Activated T-helper 2 cell treated with anti-CD3 and anti-CD28 coated beads, Interferon-gamma antibody, Interleukin-2, Interleukin-4, amounts not matched to agents 10 μg/mL and 5 μg/mL and 100 μg/mL, durations not matched to agents 14 hours and 24 hours and 36 hours (primary cell): ENCODE measurements at regions of chr6 and their contacts with region 1.

Region 1: GRCh38 chr6:143629104-143630080 is 48.4 kb upstream of the PHACTR2 start:
- DNase-seq: no peak
- H3K4me3 Mint-ChIP-seq: peak overlapping the region; percentile 13
- H3K27ac Mint-ChIP-seq: peak overlapping the region; percentile 28
- H3K4me1 Mint-ChIP-seq: peaks cover 30% of the 10 kb centered on the region
- H3K27me3 Mint-ChIP-seq: no peaks in the 10 kb centered on the region

Region 2: DNA sequence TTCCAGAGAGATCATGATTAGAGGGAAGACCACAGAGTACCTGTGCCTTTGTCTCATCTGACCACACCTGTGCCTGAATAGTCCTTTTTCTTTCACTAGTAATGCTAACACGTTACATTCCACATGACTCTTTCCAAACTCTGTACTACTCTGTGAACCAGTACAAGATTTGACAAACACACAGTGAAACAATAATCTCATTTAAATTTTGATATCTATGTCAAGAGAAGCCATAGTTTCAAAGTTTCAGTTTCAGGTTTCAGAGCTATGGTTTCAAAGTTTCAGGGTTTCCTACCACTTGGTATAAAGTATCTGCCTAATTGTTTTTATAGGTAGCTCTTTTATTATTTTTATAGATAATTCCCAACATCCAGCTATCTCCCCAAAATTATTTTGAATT is 13.6 kb before region 1 on chr6:
- intact Hi-C with region 1: loop called (anchors 1 kb)
- DNase-seq: no peak
- H3K4me3 Mint-ChIP-seq: no peak overlapping the region
- H3K27ac Mint-ChIP-seq: no peak overlapping the region
- H3K4me1 Mint-ChIP-seq: peaks cover 33% of the 10 kb centered on the region
- H3K27me3 Mint-ChIP-seq: peaks cover 7% of the 10 kb centered on the region